Endothelial cell of umbilical vein (primary cell): ENCODE measurements at regions of chr19 and their contacts with region 1.

Region 1: DNA sequence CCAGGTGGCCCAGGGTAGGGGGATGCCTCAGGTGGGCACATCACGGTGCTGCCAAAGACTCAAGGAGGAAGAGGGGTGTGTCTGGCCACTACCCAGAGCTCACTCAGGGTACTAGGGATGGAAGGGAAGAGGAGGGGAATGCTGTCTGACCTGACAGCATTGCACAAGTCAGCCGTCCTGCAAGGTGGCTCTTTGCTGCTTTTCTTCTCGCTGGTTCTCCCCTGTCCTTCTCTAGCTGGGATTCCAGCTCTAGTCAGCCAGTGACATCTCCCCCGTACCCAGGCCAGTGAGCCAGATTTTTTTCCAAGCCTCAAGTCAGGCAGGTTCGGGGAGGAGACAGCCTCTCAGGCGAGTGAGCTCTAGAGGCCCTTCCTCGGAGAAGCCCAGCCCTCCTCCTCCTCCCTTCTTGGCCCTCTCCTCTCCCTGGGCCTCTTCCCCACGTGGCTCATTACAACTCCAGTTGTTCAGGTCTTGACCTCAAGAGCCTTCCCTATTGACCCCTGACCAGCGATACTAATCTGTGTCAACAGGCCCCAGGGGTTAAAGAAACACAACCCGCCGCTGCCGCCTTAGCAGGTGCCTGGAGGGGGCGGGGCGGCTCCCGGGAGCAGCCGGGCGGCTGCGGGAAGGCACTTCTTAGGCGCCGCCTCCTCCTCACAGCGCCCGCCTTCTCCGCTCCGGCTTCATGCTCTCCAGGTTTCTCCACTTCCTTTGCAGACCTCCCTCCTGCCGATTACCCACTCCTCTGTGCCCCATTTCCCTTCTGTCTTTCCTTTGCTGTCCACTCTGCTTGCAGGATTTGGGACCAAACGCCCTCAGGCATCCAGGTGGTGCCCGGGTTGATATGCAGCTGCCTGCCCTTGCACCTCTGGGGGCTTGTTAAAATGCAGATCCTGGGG is 51.1 kb downstream of the LYL1 start:
- DNase-seq: peak; percentile 49
- H3K4me3 ChIP-seq: no peak overlapping the region
- H3K27ac ChIP-seq: no peak overlapping the region
- H3K4me1 ChIP-seq: peaks cover 51% of the 10 kb centered on the region
- H3K27me3 ChIP-seq: no peaks in the 10 kb centered on the region
- CTCF ChIP-seq: no peak
- POLR2A ChIP-seq: no peak

Region 2: DNA sequence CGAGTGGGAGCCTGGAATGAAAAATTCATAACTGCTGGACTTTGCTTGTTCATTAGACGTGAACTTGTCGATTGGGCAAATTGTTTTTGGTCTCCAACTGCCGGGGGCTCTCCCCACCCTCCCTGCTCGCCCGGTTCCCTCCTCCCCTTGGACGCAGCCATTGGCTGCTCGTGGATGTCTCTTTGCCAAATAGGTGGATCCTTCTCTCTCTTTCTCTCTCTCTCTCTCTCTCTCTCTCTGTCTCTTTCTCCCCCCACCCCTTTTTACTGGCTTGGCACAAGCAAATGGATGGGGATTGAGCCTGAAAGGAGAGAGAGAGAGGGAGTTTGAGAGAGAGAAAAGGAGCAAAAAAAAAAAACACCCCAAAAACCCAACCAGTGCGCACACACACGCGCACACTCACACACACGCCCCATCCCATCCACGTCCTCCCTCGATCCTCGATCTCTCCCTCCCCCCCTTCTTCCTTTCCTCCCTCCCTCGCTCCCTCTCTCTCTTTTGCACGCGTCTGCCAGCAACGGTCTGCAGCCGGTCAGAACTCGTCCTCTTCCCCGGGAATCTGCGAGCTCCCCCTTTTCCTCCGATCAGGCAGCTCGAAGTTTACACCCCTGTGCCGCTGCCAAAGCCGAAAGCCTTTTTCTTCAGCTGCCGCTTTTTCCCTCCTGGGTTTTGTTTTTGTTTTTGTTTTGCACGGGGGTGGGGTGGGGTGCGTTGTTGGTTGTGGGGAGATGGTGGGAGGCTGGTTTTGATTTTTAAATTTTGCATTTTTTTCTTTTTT is 28.5 kb before region 1 on chr19:
- CTCF ChIA-PET with region 1: interaction called, 463 read pairs
- POLR2A ChIA-PET with region 1: interaction called, 5 read pairs
- dilution Hi-C with region 1: no loop called
- intact Hi-C with region 1: no loop called
- DNase-seq: peak; percentile 80
- H3K4me3 ChIP-seq: peak overlapping the region; percentile 28 to 84 (median 59)
- H3K27ac ChIP-seq: peak overlapping the region; percentile 33
- H3K4me1 ChIP-seq: peaks cover 52% of the 10 kb centered on the region
- H3K27me3 ChIP-seq: no peaks in the 10 kb centered on the region
- CTCF ChIP-seq: no peak
- POLR2A ChIP-seq: peak; percentile 31